ENCODE measurements at regions of chr1 and their contacts with region 1.

Region 1: DNA sequence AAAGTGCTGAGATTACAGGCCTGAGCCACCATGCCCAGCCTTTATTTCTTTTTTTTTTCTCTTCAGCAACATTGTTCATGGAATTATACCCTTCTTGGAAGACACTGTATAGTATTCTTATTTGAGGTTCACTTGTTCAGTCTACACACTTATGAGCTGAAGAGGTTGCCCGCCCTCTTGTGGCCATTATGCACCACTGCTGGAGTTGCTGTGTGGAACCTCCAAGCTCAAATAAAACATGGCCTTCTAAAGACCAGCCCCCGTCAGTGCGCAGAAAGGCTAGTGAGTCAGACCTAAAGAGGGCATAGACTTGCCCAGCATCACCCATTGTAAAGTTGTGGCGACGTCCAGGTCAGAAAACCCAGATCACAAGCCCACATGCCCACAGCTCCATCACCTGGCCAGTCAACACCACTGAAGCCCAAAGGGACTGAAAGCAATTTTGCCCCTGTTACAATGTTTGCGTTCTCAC is 20.4 kb downstream of the LURAP1 start:
- DNase-seq: peak; percentile 22 to 59 (median 46)
- ATAC-seq: peak; percentile 93
- H3K4me3 ChIP-seq: no peak overlapping the region
- H3K4me3 Mint-ChIP-seq: no peak overlapping the region
- H3K27ac ChIP-seq: no peak overlapping the region
- H3K27ac Mint-ChIP-seq: no peak overlapping the region
- H3K4me1 ChIP-seq: no peaks in the 10 kb centered on the region
- H3K4me1 Mint-ChIP-seq: peaks cover 0 to 4% (median 2%) of the 10 kb centered on the region in 7 donors
- H3K27me3 ChIP-seq: no peaks in the 10 kb centered on the region
- H3K27me3 Mint-ChIP-seq: no peaks in the 10 kb centered on the region

Region 2: DNA sequence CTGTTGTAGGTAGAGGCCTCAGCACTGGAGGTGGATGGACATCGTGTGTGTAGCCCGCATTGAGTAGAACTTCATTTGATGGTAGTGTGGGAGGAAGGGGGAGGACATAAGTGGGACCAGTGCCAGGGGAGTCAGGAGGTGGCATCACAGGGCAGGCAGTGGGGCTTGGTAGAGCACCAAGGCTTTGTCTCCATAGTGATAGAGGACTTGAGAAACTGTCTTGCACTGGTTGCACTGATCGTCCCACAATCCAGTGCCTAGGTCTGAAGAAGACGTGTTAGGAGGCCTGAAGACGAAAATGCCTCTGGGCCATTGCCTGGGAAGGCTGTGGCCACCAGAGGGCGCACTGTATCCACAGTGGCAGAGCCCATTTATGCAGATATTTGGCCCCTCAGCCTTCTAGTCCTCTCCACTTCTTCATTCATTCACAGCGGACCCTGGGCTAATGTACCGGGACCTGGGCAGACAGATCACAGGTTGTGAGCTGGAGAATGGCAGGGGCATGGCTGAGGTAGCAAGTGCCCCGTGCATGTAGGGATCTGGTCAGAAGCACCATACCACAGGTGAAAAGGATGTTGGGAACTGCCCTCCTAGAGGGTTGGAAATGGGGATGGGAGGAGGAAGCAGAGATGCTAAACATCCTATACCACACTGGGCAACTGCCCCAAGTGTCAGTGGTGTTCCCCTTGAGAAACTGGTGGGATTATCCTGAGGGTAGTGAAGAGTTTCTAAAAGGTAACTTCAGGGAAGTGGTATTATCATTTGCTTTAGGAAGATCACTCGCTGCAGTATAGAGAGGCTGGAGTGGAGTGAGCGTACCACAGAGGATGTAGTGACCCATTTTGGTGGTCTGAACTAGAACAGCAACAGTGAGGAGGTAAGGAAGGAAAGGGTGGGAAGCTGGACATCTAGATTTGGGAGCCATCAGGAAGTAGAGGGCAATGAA is 186.3 kb before region 1 on chr1:
- CTCF ChIA-PET with region 1: interaction called, 11 read pairs
- POLR2A ChIA-PET with region 1: no interaction called
- intact Hi-C with region 1: loop called (anchors 1 kb)
- DNase-seq: peak; percentile 58 to 85 (median 78)
- ATAC-seq: peak; percentile 90
- H3K4me3 ChIP-seq: no peak overlapping the region
- H3K4me3 Mint-ChIP-seq: no peak overlapping the region
- H3K27ac ChIP-seq: no peak overlapping the region
- H3K27ac Mint-ChIP-seq: no peak overlapping the region
- H3K4me1 ChIP-seq: no peaks in the 10 kb centered on the region
- H3K4me1 Mint-ChIP-seq: no peaks in the 10 kb centered on the region
- H3K27me3 ChIP-seq: no peaks in the 10 kb centered on the region
- H3K27me3 Mint-ChIP-seq: no peaks in the 10 kb centered on the region

Region 3: DNA sequence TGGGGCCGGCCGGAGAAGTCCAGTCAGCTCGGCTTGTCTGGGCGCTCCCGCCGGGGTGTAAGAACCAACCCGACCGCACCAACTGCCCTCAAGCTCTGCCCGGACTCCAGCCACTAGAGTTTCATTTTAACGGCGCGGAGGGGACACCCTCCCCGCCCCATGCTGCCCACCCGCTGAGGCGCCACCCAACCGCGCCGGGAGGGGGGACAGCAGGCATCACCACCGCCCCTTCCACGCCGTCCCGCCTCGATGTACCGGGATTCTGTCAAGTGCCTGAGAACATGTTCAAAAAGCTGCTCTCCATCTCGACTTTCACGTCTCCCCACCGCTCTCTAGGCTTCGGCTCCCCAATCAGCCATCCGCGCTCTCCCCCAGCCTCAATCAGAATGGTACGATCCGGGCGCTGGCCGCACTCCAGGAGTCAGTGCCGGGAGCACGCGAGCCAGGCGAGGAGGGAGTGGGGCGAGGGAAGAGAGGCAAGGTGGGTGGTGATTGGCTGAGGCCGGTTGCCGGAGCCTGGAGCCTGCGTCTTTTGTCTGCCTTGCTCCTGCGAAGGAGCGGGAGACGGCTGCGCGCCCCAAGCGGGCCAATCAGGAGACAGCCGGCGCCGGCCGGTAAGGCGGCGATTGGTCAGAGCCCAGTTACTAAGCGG is 90.9 kb before region 1 on chr1 and contains the start of gene PIK3R3:
- CTCF ChIA-PET with region 1: no interaction called
- POLR2A ChIA-PET with region 1: no interaction called
- intact Hi-C with region 1: no loop called
- DNase-seq: peak; percentile 40 to 88 (median 62)
- ATAC-seq: peak; percentile 93
- H3K4me3 ChIP-seq: peak within 1 kb of the TSS; percentile 88
- H3K4me3 Mint-ChIP-seq: peak within 1 kb of the TSS; percentile 89 to 99 (median 97)
- H3K27ac ChIP-seq: peak within 1 kb of the TSS; percentile 46
- H3K27ac Mint-ChIP-seq: peak within 1 kb of the TSS; percentile 23 to 98 (median 65)
- H3K4me1 ChIP-seq: peaks cover 3 to 7% of the 10 kb centered on the region in 2 donors
- H3K4me1 Mint-ChIP-seq: peaks cover 15 to 38% (median 27%) of the 10 kb centered on the region in 7 donors
- H3K27me3 ChIP-seq: peaks cover 4 to 10% of the 10 kb centered on the region in 2 donors
- H3K27me3 Mint-ChIP-seq: peaks cover 43 to 85% (median 66%) of the 10 kb centered on the region in 5 donors
- total RNA-seq, gene PIK3R3: 0.16 to 3.0 (median 0.56) TPM

Region 4: GRCh38 chr1:46179138-46180081 is 44.1 kb before region 1 on chr1:
- CTCF ChIA-PET with region 1: interaction called, 5 read pairs
- POLR2A ChIA-PET with region 1: no interaction called
- intact Hi-C with region 1: loop called (anchors 1 kb)
- DNase-seq: peak; percentile 38 to 70 (median 58)
- ATAC-seq: peak; percentile 79
- H3K4me3 ChIP-seq: no peak overlapping the region
- H3K4me3 Mint-ChIP-seq: no peak overlapping the region
- H3K27ac ChIP-seq: no peak overlapping the region
- H3K27ac Mint-ChIP-seq: no peak overlapping the region
- H3K4me1 ChIP-seq: no peaks in the 10 kb centered on the region
- H3K4me1 Mint-ChIP-seq: peaks cover 0 to 8% (median 5%) of the 10 kb centered on the region in 7 donors
- H3K27me3 ChIP-seq: no peaks in the 10 kb centered on the region
- H3K27me3 Mint-ChIP-seq: no peaks in the 10 kb centered on the region

Measured in naive thymus-derived CD4-positive, alpha-beta T cell (primary cell).